ENCODE measurements at regions of chr1 and their contacts with region 1.

Region 1: GRCh38 chr1:75785983-75786853 is at the start of gene RABGGTB:
- DNase-seq: peak; percentile 97
- ATAC-seq: peak; percentile 84
- H3K4me3 ChIP-seq: peak within 1 kb of the TSS; percentile 95
- H3K27ac ChIP-seq: peak within 1 kb of the TSS; percentile 69
- H3K4me1 ChIP-seq: peaks cover 30% of the 10 kb centered on the region
- H3K27me3 ChIP-seq: no peaks in the 10 kb centered on the region
- CTCF ChIP-seq: no peak
- total RNA-seq, gene RABGGTB: 88.0 and 91.7 TPM in 2 replicates

Region 2: DNA sequence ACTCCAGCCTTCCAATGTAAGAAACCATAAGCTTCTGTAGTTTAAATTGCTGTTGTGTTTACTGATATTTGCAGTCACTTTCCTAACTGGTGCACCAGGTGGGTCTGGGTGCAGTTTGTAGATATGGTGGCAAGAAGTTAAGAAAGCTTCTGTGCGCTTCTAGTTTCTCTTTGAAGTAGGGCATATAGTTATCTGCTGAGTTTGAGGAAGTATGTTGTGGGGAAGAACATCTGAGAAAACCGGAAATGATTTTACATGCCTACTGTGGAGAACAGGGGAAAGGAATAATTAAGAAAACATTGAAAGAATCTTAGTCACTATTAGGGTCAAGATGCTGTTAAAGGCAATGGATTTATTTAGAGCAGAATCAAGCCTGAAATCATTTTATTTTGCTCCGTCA is 160.4 kb before region 1 on chr1:
- CTCF ChIA-PET with region 1: no interaction called
- POLR2A ChIA-PET with region 1: no interaction called
- intact Hi-C with region 1: loop called (anchors 5 kb)
- DNase-seq: no peak
- ATAC-seq: no peak
- H3K4me3 ChIP-seq: no peak overlapping the region
- H3K27ac ChIP-seq: no peak overlapping the region
- H3K4me1 ChIP-seq: no peaks in the 10 kb centered on the region
- H3K27me3 ChIP-seq: peaks cover 29% of the 10 kb centered on the region
- CTCF ChIP-seq: no peak

Region 3: GRCh38 chr1:75672528-75673393 is 113.5 kb before region 1 on chr1:
- CTCF ChIA-PET with region 1: no interaction called
- POLR2A ChIA-PET with region 1: no interaction called
- intact Hi-C with region 1: no loop called
- DNase-seq: peak; percentile 84
- ATAC-seq: peak; percentile 81
- H3K4me3 ChIP-seq: no peak overlapping the region
- H3K27ac ChIP-seq: peak overlapping the region; percentile 44
- H3K4me1 ChIP-seq: peaks cover 10% of the 10 kb centered on the region
- H3K27me3 ChIP-seq: no peaks in the 10 kb centered on the region
- CTCF ChIP-seq: no peak

Region 4: GRCh38 chr1:75724472-75725022 is 61.7 kb before region 1 on chr1 and contains the start of gene ACADM:
- CTCF ChIA-PET with region 1: no interaction called
- POLR2A ChIA-PET with region 1: no interaction called
- intact Hi-C with region 1: loop called (anchors 1 kb)
- DNase-seq: peak; percentile 87
- ATAC-seq: peak; percentile 93
- H3K4me3 ChIP-seq: peak within 1 kb of the TSS; percentile 85
- H3K27ac ChIP-seq: peak within 1 kb of the TSS; percentile 57
- H3K4me1 ChIP-seq: peaks cover 31% of the 10 kb centered on the region
- H3K27me3 ChIP-seq: no peaks in the 10 kb centered on the region
- CTCF ChIP-seq: no peak
- total RNA-seq, gene ACADM: 25.0 and 29.0 TPM in 2 replicates

Region 5: GRCh38 chr1:75736016-75736415 is 50.2 kb before region 1 on chr1:
- CTCF ChIA-PET with region 1: no interaction called
- POLR2A ChIA-PET with region 1: interaction called, 13 read pairs
- intact Hi-C with region 1: no loop called
- DNase-seq: peak; percentile 13
- ATAC-seq: no peak; the same call in 1 of the 2 replicates
- H3K4me3 ChIP-seq: no peak overlapping the region
- H3K27ac ChIP-seq: no peak overlapping the region
- H3K4me1 ChIP-seq: no peaks in the 10 kb centered on the region
- H3K27me3 ChIP-seq: no peaks in the 10 kb centered on the region
- CTCF ChIP-seq: no peak

Region 6: DNA sequence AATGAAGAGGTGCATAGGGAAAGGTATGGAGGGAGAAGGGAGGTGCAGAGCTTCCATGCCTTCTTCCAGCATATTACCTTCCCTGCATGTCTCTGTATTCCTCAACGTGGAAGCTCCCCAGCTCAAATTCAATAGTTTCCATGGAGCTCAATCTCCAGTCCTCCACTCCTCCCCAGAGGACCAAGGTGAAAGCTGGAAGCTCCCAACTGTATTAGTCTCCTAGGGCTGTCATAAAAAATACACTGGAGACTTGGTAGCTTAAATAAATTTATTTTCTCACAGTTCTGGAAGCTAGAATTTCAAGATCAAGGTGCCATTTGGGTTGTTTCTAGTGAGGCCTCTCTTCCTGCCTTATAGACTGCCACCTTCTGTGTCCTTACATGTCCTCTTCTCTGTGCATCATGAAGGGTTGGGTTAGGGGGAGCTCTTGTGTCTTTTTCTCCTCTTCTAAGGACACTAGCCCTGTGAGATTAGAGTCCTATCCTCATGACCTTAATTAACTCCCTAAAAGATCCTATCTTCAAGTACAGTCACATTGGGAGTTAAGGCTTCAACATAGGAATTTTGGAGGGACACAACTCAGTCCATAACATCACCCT is 22.1 kb before region 1 on chr1:
- CTCF ChIA-PET with region 1: no interaction called
- POLR2A ChIA-PET with region 1: interaction called, 13 read pairs
- intact Hi-C with region 1: no loop called
- DNase-seq: no peak
- ATAC-seq: no peak
- H3K4me3 ChIP-seq: no peak overlapping the region
- H3K27ac ChIP-seq: no peak overlapping the region
- H3K4me1 ChIP-seq: peaks cover 21% of the 10 kb centered on the region
- H3K27me3 ChIP-seq: no peaks in the 10 kb centered on the region
- CTCF ChIP-seq: no peak

Measured in PC-3 (cell line).